Activated CD4-positive, alpha-beta T cell treated with anti-CD3 and anti-CD28 coated beads, Interleukin-2, amount 10 ng/mL, durations not matched to agents 24 days and 14 days (primary cell): ENCODE measurements at regions of chr5 and their contacts with region 1.

Region 1: GRCh38 chr5:140725799-140726471 is 25.7 kb downstream of the ZMAT2 start:
- DNase-seq: peak; percentile 93
- H3K4me3 Mint-ChIP-seq: peak overlapping the region; percentile 84
- H3K27ac Mint-ChIP-seq: peak overlapping the region; percentile 83
- H3K4me1 Mint-ChIP-seq: peaks cover 8% of the 10 kb centered on the region
- H3K27me3 Mint-ChIP-seq: peaks cover 20% of the 10 kb centered on the region

Region 2: GRCh38 chr5:140362860-140363630 is 362.9 kb before region 1 on chr5:
- intact Hi-C with region 1: loop called (anchors 2 kb)
- DNase-seq: peak; percentile 96
- H3K4me3 Mint-ChIP-seq: peak overlapping the region; percentile 85
- H3K27ac Mint-ChIP-seq: peak overlapping the region; percentile 61
- H3K4me1 Mint-ChIP-seq: peaks cover 17% of the 10 kb centered on the region
- H3K27me3 Mint-ChIP-seq: no peaks in the 10 kb centered on the region

Region 3: DNA sequence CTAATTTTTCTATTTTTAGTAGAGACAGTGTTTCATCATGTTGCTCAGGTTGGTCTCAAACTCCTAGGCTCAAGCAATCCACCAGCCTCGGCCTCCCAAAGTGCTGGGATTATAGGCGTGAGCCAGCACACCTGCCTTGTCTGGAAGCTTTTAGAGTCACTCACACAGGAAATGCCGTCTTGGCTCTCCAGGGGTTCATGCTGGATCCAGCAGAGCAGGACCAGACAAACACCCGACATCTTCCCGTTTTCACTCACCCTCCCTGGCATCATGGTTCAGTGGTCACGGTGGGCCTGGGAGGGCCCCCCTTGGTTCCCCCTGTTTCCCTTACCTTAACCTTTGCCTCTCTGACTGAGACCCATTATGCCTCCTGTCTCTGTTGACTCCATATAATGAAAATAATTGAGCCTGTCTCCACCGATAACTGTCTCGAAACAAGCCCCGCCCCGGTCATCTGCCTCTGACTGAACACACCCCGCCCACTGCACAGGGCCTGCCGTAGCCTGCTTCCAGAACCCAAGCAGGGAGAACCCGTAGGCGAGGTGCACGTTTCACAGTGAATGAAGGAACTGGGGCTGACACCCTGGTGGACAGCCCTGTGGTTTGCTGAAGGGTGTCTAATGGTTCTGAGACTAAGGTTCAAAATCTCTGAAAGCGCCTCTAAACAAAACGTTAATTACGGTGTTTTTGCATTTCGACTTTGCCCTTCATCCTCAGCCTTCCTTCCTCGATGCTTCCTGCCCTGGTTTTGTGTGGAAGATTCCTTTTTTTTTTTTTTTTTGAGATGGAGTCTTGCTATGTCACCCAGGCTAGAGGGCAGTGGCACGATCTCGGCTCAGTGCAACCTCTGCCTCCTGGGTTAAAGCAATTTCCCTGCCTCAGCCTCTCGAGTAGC is 1638.6 kb after region 1 on chr5:
- intact Hi-C with region 1: no loop called
- DNase-seq: no peak
- H3K4me3 Mint-ChIP-seq: no peak overlapping the region
- H3K27ac Mint-ChIP-seq: no peak overlapping the region
- H3K4me1 Mint-ChIP-seq: peaks cover 29% of the 10 kb centered on the region
- H3K27me3 Mint-ChIP-seq: peaks cover 3% of the 10 kb centered on the region